ENCODE measurements at regions of chr5 and their contacts with region 1.

Region 1: GRCh38 chr5:54492178-54492577 is 25.4 kb upstream of the SNX18 start:
- DNase-seq: no peak
- ATAC-seq: no peak
- H3K4me3 ChIP-seq: no peak overlapping the region
- H3K27ac ChIP-seq: no peak overlapping the region
- H3K4me1 ChIP-seq: peaks cover 3% of the 10 kb centered on the region; the same call in 1 of the 2 replicates
- H3K27me3 ChIP-seq: no peaks in the 10 kb centered on the region
- CTCF ChIP-seq: no peak
- EP300 ChIP-seq: no peak
- POLR2A ChIP-seq: no peak
- RAD21 ChIP-seq: no peak

Region 2: GRCh38 chr5:54243473-54244080 is 248.6 kb before region 1 on chr5:
- CTCF ChIA-PET with region 1: interaction called, 96 read pairs
- POLR2A ChIA-PET with region 1: no interaction called
- RAD21 ChIA-PET with region 1: interaction called, 40 read pairs
- SMC1A ChIA-PET with region 1: interaction called, 29 read pairs
- in situ Hi-C with region 1: no loop called
- intact Hi-C with region 1: loop called (anchors 1 kb)
- DNase-seq: no peak
- ATAC-seq: peak; percentile 84
- H3K4me3 ChIP-seq: no peak overlapping the region
- H3K27ac ChIP-seq: no peak overlapping the region
- H3K4me1 ChIP-seq: no peaks in the 10 kb centered on the region
- H3K27me3 ChIP-seq: no peaks in the 10 kb centered on the region
- CTCF ChIP-seq: peak; percentile 57 to 72 (median 72); a peak in 5 of 6 replicates
- EP300 ChIP-seq: no peak
- POLR2A ChIP-seq: no peak
- RAD21 ChIP-seq: peak; percentile 86

Region 3: GRCh38 chr5:54310433-54311175 is 181.6 kb before region 1 on chr5 and contains the start of gene ARL15:
- CTCF ChIA-PET with region 1: interaction called, 11 read pairs
- POLR2A ChIA-PET with region 1: no interaction called
- RAD21 ChIA-PET with region 1: interaction called, 4 read pairs
- SMC1A ChIA-PET with region 1: interaction called, 11 read pairs
- in situ Hi-C with region 1: no loop called
- intact Hi-C with region 1: loop called (anchors 5 kb)
- DNase-seq: peak; percentile 87
- ATAC-seq: peak; percentile 95
- H3K4me3 ChIP-seq: peak within 1 kb of the TSS; percentile 90
- H3K27ac ChIP-seq: peak within 1 kb of the TSS; percentile 49
- H3K4me1 ChIP-seq: no peaks in the 10 kb centered on the region
- H3K27me3 ChIP-seq: no peaks in the 10 kb centered on the region
- CTCF ChIP-seq: no peak
- EP300 ChIP-seq: 0 out of 4 replicates have a peak, but pooled peaks of 1 of the 2 experiments have one; percentile 17
- POLR2A ChIP-seq: peak; percentile 100
- RAD21 ChIP-seq: no peak
- polyA plus RNA-seq, gene ARL15: 3.6 to 3.7 TPM

Region 4: GRCh38 chr5:54383225-54383901 is 108.8 kb before region 1 on chr5:
- CTCF ChIA-PET with region 1: interaction called, 18 read pairs
- POLR2A ChIA-PET with region 1: interaction called, 3 read pairs
- RAD21 ChIA-PET with region 1: interaction called, 17 read pairs
- SMC1A ChIA-PET with region 1: interaction called, 13 read pairs
- in situ Hi-C with region 1: no loop called
- intact Hi-C with region 1: no loop called
- DNase-seq: no peak
- ATAC-seq: no peak
- H3K4me3 ChIP-seq: no peak overlapping the region
- H3K27ac ChIP-seq: no peak overlapping the region
- H3K4me1 ChIP-seq: no peaks in the 10 kb centered on the region
- H3K27me3 ChIP-seq: no peaks in the 10 kb centered on the region
- CTCF ChIP-seq: no peak
- EP300 ChIP-seq: no peak
- POLR2A ChIP-seq: no peak
- RAD21 ChIP-seq: no peak

Region 5: GRCh38 chr5:54421976-54422375 is 70.2 kb before region 1 on chr5:
- CTCF ChIA-PET with region 1: interaction called, 31 read pairs
- POLR2A ChIA-PET with region 1: interaction called, 3 read pairs
- RAD21 ChIA-PET with region 1: interaction called, 3 read pairs
- SMC1A ChIA-PET with region 1: interaction called, 14 read pairs
- in situ Hi-C with region 1: no loop called
- intact Hi-C with region 1: no loop called
- DNase-seq: no peak
- ATAC-seq: no peak
- H3K4me3 ChIP-seq: no peak overlapping the region
- H3K27ac ChIP-seq: no peak overlapping the region
- H3K4me1 ChIP-seq: no peaks in the 10 kb centered on the region
- H3K27me3 ChIP-seq: no peaks in the 10 kb centered on the region
- CTCF ChIP-seq: no peak
- EP300 ChIP-seq: no peak
- POLR2A ChIP-seq: no peak
- RAD21 ChIP-seq: no peak

Region 6: DNA sequence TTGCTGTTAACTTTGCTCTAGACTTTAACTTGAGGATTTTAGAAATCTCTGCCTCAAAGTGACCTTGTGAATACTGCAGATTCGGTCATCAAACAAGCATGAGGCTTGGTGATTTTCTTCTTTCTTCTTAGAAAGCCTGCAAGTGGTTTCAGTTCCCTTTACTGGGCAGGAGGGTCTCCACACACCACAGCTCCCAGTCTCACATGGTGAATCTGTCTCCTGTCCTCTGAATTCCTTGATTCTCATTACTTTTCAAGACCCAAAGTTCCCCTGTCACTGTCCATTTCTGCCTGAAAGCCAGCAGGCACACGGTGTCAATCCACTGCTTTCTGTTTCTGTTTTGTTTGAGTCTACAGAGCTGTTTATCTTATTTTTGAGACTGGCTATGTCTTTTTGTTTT is 22.6 kb before region 1 on chr5:
- CTCF ChIA-PET with region 1: interaction called, 29 read pairs
- POLR2A ChIA-PET with region 1: no interaction called
- RAD21 ChIA-PET with region 1: interaction called, 3 read pairs
- SMC1A ChIA-PET with region 1: interaction called, 9 read pairs
- in situ Hi-C with region 1: no loop called
- intact Hi-C with region 1: no loop called
- DNase-seq: peak; percentile 40
- ATAC-seq: peak; percentile 92
- H3K4me3 ChIP-seq: no peak overlapping the region
- H3K27ac ChIP-seq: no peak overlapping the region
- H3K4me1 ChIP-seq: peaks cover 5% of the 10 kb centered on the region
- H3K27me3 ChIP-seq: no peaks in the 10 kb centered on the region
- CTCF ChIP-seq: no peak
- EP300 ChIP-seq: peak in 1 of 2 experiments; percentile 41; a peak in 1 of 4 replicates
- POLR2A ChIP-seq: no peak
- RAD21 ChIP-seq: no peak

Region 7: DNA sequence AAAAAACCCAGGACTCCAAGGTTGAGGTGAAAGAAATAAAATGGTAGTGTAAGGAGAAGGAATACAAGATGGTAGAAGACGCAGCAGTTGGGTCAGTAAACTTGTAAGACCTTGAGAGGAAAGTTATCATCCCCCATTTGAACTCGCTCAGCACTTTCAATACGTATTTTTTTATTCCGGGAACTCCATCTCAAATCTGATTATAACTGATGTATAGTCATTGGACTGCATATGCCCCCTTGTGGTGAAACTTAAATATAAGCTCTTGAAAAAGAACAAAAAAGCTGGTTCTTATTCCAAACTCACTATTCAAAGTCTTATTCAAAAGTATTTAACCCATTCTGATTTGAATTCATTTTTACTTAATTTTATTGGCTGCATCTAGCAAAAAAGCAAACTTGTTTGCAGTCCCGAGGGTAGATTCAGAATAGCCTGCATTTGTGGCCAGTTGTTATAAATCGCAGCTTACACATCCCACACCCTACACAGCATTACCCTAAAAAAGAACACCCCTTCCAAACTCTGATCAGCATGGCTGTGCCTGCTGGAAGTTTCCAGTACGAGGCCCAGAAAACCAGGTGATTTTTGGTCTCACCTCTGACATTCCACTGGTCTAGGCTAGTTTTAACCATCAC is 375.2 kb after region 1 on chr5:
- CTCF ChIA-PET with region 1: interaction called, 17 read pairs
- POLR2A ChIA-PET with region 1: no interaction called
- RAD21 ChIA-PET with region 1: no interaction called
- SMC1A ChIA-PET with region 1: no interaction called
- in situ Hi-C with region 1: no loop called
- intact Hi-C with region 1: no loop called
- DNase-seq: no peak
- ATAC-seq: peak; percentile 38; the same call in 1 of the 3 replicates
- H3K4me3 ChIP-seq: no peak overlapping the region
- H3K27ac ChIP-seq: no peak overlapping the region
- H3K4me1 ChIP-seq: no peaks in the 10 kb centered on the region
- H3K27me3 ChIP-seq: peaks cover 2 to 4% of the 10 kb centered on the region in 2 experiments; a peak in 2 of 4 replicates
- CTCF ChIP-seq: peak; percentile 36 to 47 (median 46); a peak in 5 of 6 replicates
- EP300 ChIP-seq: no peak
- POLR2A ChIP-seq: no peak
- RAD21 ChIP-seq: peak; percentile 56